MCF 10A (cell line): ENCODE measurements at regions of chr11 and their contacts with region 1.

Region 1: DNA sequence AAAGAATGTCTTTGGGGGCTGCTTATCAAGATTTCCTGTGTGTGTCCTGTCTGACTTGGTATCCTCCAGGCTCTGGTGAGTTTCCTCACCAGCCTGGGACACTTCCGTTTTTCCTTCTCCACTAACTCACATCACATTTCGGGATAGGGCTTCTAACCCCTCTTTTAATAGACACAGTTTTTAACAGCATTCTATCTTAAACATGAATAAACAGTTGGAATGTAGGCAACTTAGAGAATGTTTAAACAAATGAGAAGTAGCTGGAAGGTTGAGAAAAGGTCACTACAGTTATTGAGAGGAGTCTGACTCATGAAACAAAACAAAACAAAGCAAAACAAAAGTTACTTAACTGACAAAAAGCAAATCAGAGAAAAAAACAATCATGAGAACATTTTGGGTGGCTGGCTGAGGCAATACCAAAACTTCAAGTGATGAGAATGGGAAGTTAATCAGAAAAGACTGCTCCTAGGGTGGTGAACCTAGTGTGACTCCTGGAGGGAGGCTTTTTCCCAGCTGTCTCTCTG is 64.7 kb upstream of the CTSC start:
- DNase-seq: peak; percentile 87
- H3K4me3 Mint-ChIP-seq: no peak overlapping the region
- H3K27ac Mint-ChIP-seq: peak overlapping the region; percentile 95
- H3K4me1 Mint-ChIP-seq: peaks cover 43% of the 10 kb centered on the region
- H3K27me3 Mint-ChIP-seq: no peaks in the 10 kb centered on the region
- CTCF ChIP-seq: no peak

Region 2: GRCh38 chr11:87769661-87770060 is 632.6 kb before region 1 on chr11:
- CTCF ChIA-PET with region 1: no interaction called
- POLR2A ChIA-PET with region 1: no interaction called
- intact Hi-C with region 1: no loop called
- DNase-seq: no peak
- H3K4me3 Mint-ChIP-seq: no peak overlapping the region
- H3K27ac Mint-ChIP-seq: no peak overlapping the region
- H3K4me1 Mint-ChIP-seq: no peaks in the 10 kb centered on the region
- H3K27me3 Mint-ChIP-seq: peaks cover 10% of the 10 kb centered on the region
- CTCF ChIP-seq: no peak

Region 3: DNA sequence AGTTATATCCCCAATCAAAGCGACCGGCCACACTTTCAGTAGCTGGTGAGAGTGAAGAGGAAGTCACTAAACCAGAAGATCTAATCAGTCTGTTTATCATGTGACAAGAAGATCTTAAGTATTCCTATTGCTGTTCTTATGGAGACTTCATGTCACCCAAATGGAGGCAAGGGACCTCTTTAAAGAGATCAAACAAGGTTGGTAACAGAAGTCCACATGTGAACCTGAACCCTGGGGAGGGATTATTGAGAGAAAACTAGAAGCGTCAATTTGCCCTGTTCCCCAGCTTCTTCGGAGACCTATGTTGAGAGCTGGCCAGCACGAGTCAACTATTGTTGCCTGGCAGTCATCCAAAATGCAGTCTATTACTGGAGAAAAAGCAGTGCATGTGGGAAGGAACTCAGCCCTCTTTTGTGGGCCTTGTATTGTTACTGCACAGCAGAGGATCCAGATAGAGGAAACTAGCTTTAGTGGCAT is 12.2 kb after region 1 on chr11:
- CTCF ChIA-PET with region 1: interaction called, 4 read pairs
- POLR2A ChIA-PET with region 1: interaction called, 13 read pairs
- intact Hi-C with region 1: no loop called
- DNase-seq: peak; percentile 83
- H3K4me3 Mint-ChIP-seq: no peak overlapping the region
- H3K27ac Mint-ChIP-seq: peak overlapping the region; percentile 20
- H3K4me1 Mint-ChIP-seq: peaks cover 37% of the 10 kb centered on the region
- H3K27me3 Mint-ChIP-seq: no peaks in the 10 kb centered on the region
- CTCF ChIP-seq: no peak

Region 4: GRCh38 chr11:88535916-88536547 is 133.8 kb after region 1 on chr11:
- CTCF ChIA-PET with region 1: no interaction called
- POLR2A ChIA-PET with region 1: interaction called, 4 read pairs
- intact Hi-C with region 1: loop called (anchors 5 kb)
- DNase-seq: peak; percentile 82
- H3K4me3 Mint-ChIP-seq: no peak overlapping the region
- H3K27ac Mint-ChIP-seq: peak overlapping the region; percentile 0
- H3K4me1 Mint-ChIP-seq: peaks cover 37% of the 10 kb centered on the region
- H3K27me3 Mint-ChIP-seq: no peaks in the 10 kb centered on the region
- CTCF ChIP-seq: no peak

Region 5: GRCh38 chr11:88779577-88779976 is 377.3 kb after region 1 on chr11:
- CTCF ChIA-PET with region 1: no interaction called
- POLR2A ChIA-PET with region 1: no interaction called
- intact Hi-C with region 1: no loop called
- DNase-seq: peak; percentile 27
- H3K4me3 Mint-ChIP-seq: no peak overlapping the region
- H3K27ac Mint-ChIP-seq: no peak overlapping the region
- H3K4me1 Mint-ChIP-seq: peaks cover 6% of the 10 kb centered on the region
- H3K27me3 Mint-ChIP-seq: peaks cover 47% of the 10 kb centered on the region
- CTCF ChIP-seq: no peak